ENCODE measurements at regions of chr5 and their contacts with region 1.

Region 1: DNA sequence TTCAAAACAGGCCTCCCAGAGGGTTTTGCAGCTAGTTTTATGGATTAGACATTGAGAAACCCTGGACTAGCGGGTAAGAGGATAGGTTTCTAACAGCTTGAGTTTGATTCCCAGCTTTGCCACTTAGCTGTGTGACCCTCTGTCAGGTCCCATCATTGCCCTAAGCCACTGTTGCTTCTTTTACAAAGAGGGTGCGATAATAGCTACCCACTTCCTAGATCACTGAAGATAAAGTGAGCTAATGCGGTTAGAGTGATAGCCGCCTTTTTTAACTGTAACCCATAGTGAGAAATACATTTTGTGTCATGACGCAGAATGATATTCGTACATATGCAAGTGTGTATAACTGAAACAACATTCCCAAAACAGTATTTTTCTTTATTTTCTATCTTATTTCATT is 40.3 kb downstream of the CSF1R start:
- DNase-seq: peak in 1 of 2 donors; percentile 75
- ATAC-seq: peak; percentile 89 to 94 (median 90)
- H3K4me3 ChIP-seq: no peak overlapping the region
- H3K4me3 Mint-ChIP-seq: peak overlapping the region; percentile 63
- H3K27ac ChIP-seq: no peak overlapping the region
- H3K27ac Mint-ChIP-seq: peak overlapping the region; percentile 71 to 82
- H3K4me1 ChIP-seq: peaks cover 48% of the 10 kb centered on the region
- H3K4me1 Mint-ChIP-seq: peaks cover 75 to 76% of the 10 kb centered on the region in 2 donors
- H3K27me3 ChIP-seq: peaks cover 20% of the 10 kb centered on the region
- H3K27me3 Mint-ChIP-seq: peaks cover 47 to 49% of the 10 kb centered on the region in 2 donors
- CTCF ChIP-seq: no peak

Region 2: DNA sequence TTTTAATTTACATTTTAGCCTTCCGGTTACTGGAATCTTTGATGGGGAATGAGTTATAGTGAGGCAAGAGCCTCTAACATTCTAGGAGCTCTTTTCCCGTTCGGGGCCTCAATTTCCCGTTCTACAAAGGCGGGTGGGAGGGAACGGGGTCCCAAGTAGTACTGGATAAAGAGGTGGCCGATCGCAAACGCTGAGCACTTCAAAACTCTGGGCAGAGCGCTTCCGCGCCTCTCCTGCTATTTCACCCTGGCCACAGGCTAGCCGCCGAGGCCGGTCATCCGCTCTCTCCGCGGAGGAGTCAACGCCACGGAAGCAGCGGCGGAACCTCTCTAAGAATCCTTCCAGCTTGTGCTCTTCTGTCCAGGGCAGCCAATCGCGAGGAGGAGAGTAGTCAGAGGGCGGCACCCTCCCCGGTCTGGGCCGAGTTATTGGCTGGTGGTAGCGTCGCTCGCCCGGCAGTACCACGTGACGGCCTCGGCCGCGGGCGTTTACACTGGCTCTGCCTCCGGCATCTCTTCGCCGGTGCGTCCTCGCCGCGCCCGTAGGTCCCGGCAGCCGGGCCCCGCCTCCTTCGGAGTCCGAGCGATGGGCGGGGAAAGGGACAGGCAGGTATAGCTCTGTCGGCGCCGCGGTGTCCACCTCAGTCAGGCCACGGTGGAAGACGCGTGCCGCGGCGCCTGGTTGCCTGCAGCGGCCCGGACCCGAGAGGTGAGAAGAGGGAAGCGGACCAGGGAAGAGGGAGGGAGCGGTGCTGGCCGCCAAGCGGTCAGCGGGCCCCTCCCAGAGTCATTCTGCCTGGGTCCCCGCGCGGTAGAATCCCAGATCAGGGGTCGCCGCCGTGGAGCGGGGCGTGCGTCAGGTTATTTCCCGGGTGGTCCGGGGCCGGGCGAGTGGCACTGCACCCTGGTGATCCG is 85.5 kb before region 1 on chr5 and contains the start of gene SLC26A2:
- intact Hi-C with region 1: loop called (anchors 2 kb)
- DNase-seq: peak; percentile 91 to 96
- ATAC-seq: peak; percentile 96 to 99 (median 98)
- H3K4me3 ChIP-seq: peak within 1 kb of the TSS; percentile 87
- H3K4me3 Mint-ChIP-seq: peak within 1 kb of the TSS; percentile 97
- H3K27ac ChIP-seq: peak within 1 kb of the TSS; percentile 80
- H3K27ac Mint-ChIP-seq: peak within 1 kb of the TSS; percentile 95 to 96
- H3K4me1 ChIP-seq: peaks cover 17% of the 10 kb centered on the region
- H3K4me1 Mint-ChIP-seq: peaks cover 29 to 36% of the 10 kb centered on the region in 2 donors
- H3K27me3 ChIP-seq: no peaks in the 10 kb centered on the region
- H3K27me3 Mint-ChIP-seq: no peaks in the 10 kb centered on the region
- CTCF ChIP-seq: no peak
- total RNA-seq, gene SLC26A2: 6.2 to 10.9 (median 8.1) TPM

Region 3: DNA sequence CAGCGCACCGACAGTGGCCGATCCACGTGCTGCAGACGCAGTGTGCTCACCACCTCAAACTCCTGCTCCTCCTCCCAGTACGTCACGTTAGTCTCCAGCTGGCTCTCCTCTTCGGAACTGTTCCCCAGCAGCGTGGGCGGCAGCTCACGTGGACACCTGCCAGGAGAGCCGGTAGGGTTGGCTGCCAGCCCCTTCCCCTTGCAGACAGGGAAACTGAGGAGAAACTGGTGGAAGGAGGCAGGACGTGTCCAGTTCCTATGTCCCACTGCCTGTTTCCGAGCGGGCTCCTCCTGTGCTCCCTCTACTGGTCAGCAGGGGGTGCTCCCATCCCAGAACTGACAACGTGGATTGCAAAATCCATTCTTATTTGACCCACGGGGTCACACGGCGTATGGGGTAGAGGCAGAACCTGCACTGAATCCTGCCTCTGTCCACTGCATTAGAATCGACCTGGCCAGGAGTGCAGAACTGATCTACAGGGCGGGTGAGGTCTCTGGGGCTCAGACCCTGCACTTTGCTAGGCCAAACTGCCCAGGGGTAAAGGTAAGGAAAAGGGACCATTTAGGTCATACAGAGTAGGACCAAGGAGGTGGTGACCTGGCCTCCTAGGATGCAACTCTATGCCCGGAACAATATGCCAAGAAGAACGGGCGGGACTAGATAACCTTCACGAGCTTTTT is 83.9 kb after region 1 on chr5:
- intact Hi-C with region 1: no loop called
- DNase-seq: peak; percentile 53 to 60
- ATAC-seq: peak; percentile 62 to 89 (median 79)
- H3K4me3 ChIP-seq: no peak overlapping the region
- H3K4me3 Mint-ChIP-seq: peak overlapping the region; percentile 62
- H3K27ac ChIP-seq: no peak overlapping the region
- H3K27ac Mint-ChIP-seq: peak overlapping the region; percentile 45 to 74
- H3K4me1 ChIP-seq: peaks cover 27% of the 10 kb centered on the region
- H3K4me1 Mint-ChIP-seq: peaks cover 21 to 43% of the 10 kb centered on the region in 2 donors
- H3K27me3 ChIP-seq: no peaks in the 10 kb centered on the region
- H3K27me3 Mint-ChIP-seq: peaks cover 0 to 3% of the 10 kb centered on the region in 2 donors
- CTCF ChIP-seq: peak; percentile 81

Measured in natural killer cell (primary cell).